ENCODE measurements at regions of chr13 and their contacts with region 1.

Region 1: DNA sequence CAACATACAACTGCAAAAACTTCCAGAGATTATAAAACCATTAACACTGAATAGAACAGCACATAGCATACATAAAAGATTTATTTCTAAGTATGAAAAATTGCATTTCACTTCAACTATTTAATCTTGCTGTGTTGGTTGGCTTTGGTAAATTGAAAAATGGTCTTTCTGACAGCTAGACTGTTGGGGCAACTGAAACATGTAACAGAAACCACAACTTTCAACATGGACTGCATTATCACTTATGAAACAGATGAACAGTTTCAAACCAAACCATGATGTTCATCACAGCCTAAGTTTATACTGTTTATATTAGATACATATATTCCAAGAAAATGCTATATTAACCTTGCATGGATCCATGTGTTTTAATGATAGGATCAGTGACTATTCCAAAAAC is 324.1 kb upstream of the PCDH9 start:
- DNase-seq: peak; percentile 51
- ATAC-seq: peak; percentile 38; the same call in 1 of the 2 replicates
- H3K4me3 ChIP-seq: no peak overlapping the region
- H3K27ac ChIP-seq: no peak overlapping the region
- H3K4me1 ChIP-seq: peaks cover 5% of the 10 kb centered on the region; the same call in 1 of the 2 replicates
- H3K27me3 ChIP-seq: no peaks in the 10 kb centered on the region
- CTCF ChIP-seq: no peak
- POLR2A ChIP-seq: no peak
- RAD21 ChIP-seq: no peak

Region 2: GRCh38 chr13:67619995-67620380 is 65.7 kb after region 1 on chr13:
- CTCF ChIA-PET with region 1: no interaction called
- POLR2A ChIA-PET with region 1: no interaction called
- dilution Hi-C with region 1: no loop called
- in situ Hi-C with region 1: no loop called
- intact Hi-C with region 1: loop called (anchors 2 kb)
- DNase-seq: peak; percentile 64
- ATAC-seq: peak; percentile 53
- H3K4me3 ChIP-seq: no peak overlapping the region
- H3K27ac ChIP-seq: no peak overlapping the region
- H3K4me1 ChIP-seq: peaks cover 2% of the 10 kb centered on the region; the same call in 1 of the 2 replicates
- H3K27me3 ChIP-seq: no peaks in the 10 kb centered on the region
- CTCF ChIP-seq: no peak
- POLR2A ChIP-seq: no peak
- RAD21 ChIP-seq: no peak

Region 3: GRCh38 chr13:68019901-68020300 is 465.6 kb after region 1 on chr13:
- CTCF ChIA-PET with region 1: no interaction called
- POLR2A ChIA-PET with region 1: no interaction called
- dilution Hi-C with region 1: no loop called
- in situ Hi-C with region 1: no loop called
- intact Hi-C with region 1: no loop called
- DNase-seq: no peak
- ATAC-seq: no peak
- H3K4me3 ChIP-seq: no peak overlapping the region
- H3K27ac ChIP-seq: no peak overlapping the region
- H3K4me1 ChIP-seq: no peaks in the 10 kb centered on the region
- H3K27me3 ChIP-seq: no peaks in the 10 kb centered on the region
- CTCF ChIP-seq: no peak
- POLR2A ChIP-seq: no peak
- RAD21 ChIP-seq: no peak